ENCODE measurements at regions of chr2 and their contacts with region 1.

Region 1: GRCh38 chr2:64523666-64524603 is at the start of gene AFTPH:
- DNase-seq: peak; percentile 99
- H3K4me3 Mint-ChIP-seq: peak within 1 kb of the TSS; percentile 100
- H3K27ac Mint-ChIP-seq: peak within 1 kb of the TSS; percentile 100
- H3K4me1 Mint-ChIP-seq: peaks cover 36% of the 10 kb centered on the region
- H3K27me3 Mint-ChIP-seq: peaks cover 5% of the 10 kb centered on the region
- total RNA-seq, gene AFTPH: 34.6 and 36.6 TPM in 2 replicates

Region 2: GRCh38 chr2:63849381-63850203 is 674.3 kb before region 1 on chr2:
- intact Hi-C with region 1: loop called (anchors 10 kb)
- DNase-seq: no peak
- H3K4me3 Mint-ChIP-seq: no peak overlapping the region
- H3K27ac Mint-ChIP-seq: no peak overlapping the region
- H3K4me1 Mint-ChIP-seq: peaks cover 76% of the 10 kb centered on the region
- H3K27me3 Mint-ChIP-seq: no peaks in the 10 kb centered on the region

Region 3: GRCh38 chr2:64538764-64539433 is 15.0 kb after region 1 on chr2:
- intact Hi-C with region 1: loop called (anchors 1 kb)
- DNase-seq: no peak
- H3K4me3 Mint-ChIP-seq: peak overlapping the region; percentile 31
- H3K27ac Mint-ChIP-seq: peak overlapping the region; percentile 59
- H3K4me1 Mint-ChIP-seq: peaks cover 66% of the 10 kb centered on the region
- H3K27me3 Mint-ChIP-seq: no peaks in the 10 kb centered on the region

Region 4: GRCh38 chr2:64644177-64645004 is 120.5 kb after region 1 on chr2:
- intact Hi-C with region 1: loop called (anchors 2 kb)
- DNase-seq: peak; percentile 53
- H3K4me3 Mint-ChIP-seq: peak overlapping the region; percentile 87
- H3K27ac Mint-ChIP-seq: peak overlapping the region; percentile 92
- H3K4me1 Mint-ChIP-seq: peaks cover 72% of the 10 kb centered on the region
- H3K27me3 Mint-ChIP-seq: no peaks in the 10 kb centered on the region

Region 5: DNA sequence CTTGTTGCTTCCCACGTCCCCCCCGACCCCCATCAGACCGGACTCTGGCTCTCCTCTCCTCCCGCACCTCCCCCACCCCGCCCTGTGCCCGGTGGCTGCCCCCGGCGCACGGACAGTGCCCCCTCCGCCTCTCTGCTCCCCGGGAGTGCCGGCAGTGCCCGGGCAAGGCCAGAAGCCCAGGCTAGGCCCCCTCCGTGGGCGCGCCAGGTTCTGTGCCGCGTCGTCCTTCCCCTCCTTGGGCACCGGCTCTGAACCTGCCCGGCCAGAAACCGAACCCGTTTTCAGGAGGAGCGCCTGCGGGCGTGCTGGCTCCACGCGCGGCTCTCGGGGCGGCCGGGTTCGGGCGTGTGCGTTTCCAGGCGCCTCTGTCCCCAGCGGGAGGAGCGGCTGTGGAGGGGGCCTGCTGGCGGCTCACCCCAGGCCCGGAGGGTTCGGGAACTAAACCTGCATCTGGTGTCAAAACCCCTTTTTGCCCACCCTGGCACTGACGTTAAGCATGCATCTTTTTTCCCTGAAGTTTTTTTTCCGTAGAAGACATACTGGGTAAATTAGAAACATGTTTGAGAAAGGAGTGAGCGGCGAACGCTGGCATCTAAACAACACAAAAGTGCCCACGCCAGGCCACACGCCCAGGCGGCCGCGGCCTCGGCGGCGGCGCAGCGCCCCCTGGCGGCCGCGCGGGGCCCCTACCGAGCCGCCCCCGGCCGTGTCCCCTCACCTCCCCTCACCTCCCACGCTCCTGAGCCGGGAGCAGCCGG is 341.3 kb after region 1 on chr2:
- intact Hi-C with region 1: loop called (anchors 2 kb)
- DNase-seq: peak; percentile 57
- H3K4me3 Mint-ChIP-seq: peak overlapping the region; percentile 74
- H3K27ac Mint-ChIP-seq: no peak overlapping the region
- H3K4me1 Mint-ChIP-seq: peaks cover 4% of the 10 kb centered on the region
- H3K27me3 Mint-ChIP-seq: peaks cover 13% of the 10 kb centered on the region

Region 6: DNA sequence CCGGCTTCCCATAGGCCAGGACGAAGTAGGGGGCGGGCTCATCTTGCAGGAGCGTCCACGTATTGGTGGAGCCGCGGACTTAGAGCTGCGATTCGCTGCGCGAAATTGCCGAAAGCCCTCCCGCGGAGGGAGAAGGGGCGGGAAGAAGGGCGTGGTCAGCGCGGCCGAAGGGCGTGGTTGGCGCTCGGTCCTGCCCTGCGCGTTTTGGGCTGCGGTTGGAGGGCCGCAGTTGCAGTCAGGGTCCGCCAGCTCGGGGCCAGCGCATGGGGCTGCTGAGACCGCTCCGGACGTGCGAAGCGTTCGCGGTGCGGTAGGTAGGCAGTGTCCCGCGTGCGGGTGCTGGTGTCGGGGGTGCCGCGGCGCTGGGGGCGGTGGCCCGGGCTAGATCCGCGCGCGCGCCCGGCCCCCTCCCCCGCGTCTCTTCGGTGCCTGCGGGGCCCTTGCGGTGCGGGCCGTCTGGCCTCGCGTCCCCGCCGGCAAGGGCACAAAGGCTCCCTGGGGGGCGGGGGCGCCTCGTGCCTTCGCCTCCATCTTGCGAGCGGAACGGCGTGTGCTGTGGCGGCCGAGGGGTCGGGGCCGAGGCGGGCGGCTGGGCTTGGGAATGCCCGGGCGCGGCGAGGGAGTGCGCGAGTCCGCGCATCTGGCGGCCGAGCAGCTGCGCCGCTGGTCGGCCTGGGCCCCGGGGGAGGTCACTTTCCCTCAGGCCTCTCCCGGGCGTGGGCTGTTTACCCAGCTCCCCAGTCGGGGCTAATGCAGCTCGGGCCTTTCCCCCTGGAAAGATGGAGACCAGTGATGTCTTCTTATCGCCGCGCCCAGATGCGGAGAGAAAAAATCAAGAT is 532.5 kb after region 1 on chr2 and contains the start of gene CEP68:
- intact Hi-C with region 1: loop called (anchors 10 kb)
- DNase-seq: peak; percentile 96
- H3K4me3 Mint-ChIP-seq: peak within 1 kb of the TSS; percentile 92
- H3K27ac Mint-ChIP-seq: peak within 1 kb of the TSS; percentile 73
- H3K4me1 Mint-ChIP-seq: peaks cover 52% of the 10 kb centered on the region
- H3K27me3 Mint-ChIP-seq: no peaks in the 10 kb centered on the region
- total RNA-seq, gene CEP68: 5.9 and 6.1 TPM in 2 replicates

Measured in activated T-helper 2 cell treated with anti-CD3 and anti-CD28 coated beads, Interferon-gamma antibody, Interleukin-2, Interleukin-4, amounts not matched to agents 10 μg/mL and 5 μg/mL and 100 μg/mL, durations not matched to agents 14 hours and 24 hours and 36 hours (primary cell).